Common myeloid progenitor, CD34-positive (primary cell): ENCODE measurements at regions of chr12 and their contacts with region 1.

Region 1: GRCh38 chr12:1634590-1635191 is 5.7 kb downstream of the WNT5B start:
- DNase-seq: peak; percentile 64 to 76 (median 66)
- H3K4me3 ChIP-seq: no peak overlapping the region
- H3K27ac ChIP-seq: no peak overlapping the region
- H3K4me1 ChIP-seq: peaks cover 2 to 24% (median 18%) of the 10 kb centered on the region in 4 experiments
- H3K27me3 ChIP-seq: peaks cover 2 to 41% (median 26%) of the 10 kb centered on the region in 5 experiments

Region 2: GRCh38 chr12:1605129-1606020 is 29.3 kb before region 1 on chr12:
- CTCF ChIA-PET with region 1: interaction called, 21 read pairs
- POLR2A ChIA-PET with region 1: no interaction called
- DNase-seq: peak; percentile 81 to 82 (median 81)
- H3K4me3 ChIP-seq: peak overlapping the region; percentile 17 to 85 (median 70)
- H3K27ac ChIP-seq: no peak overlapping the region
- H3K4me1 ChIP-seq: peaks cover 9 to 31% (median 21%) of the 10 kb centered on the region in 4 experiments
- H3K27me3 ChIP-seq: peaks cover 0 to 3% (median 0%) of the 10 kb centered on the region in 5 experiments

Region 3: GRCh38 chr12:1644534-1645438 is 10.1 kb after region 1 on chr12:
- CTCF ChIA-PET with region 1: interaction called, 160 read pairs
- POLR2A ChIA-PET with region 1: no interaction called
- DNase-seq: peak in 2 of 3 donors; percentile 50 to 84
- H3K4me3 ChIP-seq: no peak overlapping the region
- H3K27ac ChIP-seq: no peak overlapping the region
- H3K4me1 ChIP-seq: peaks cover 0 to 10% (median 5%) of the 10 kb centered on the region in 4 experiments
- H3K27me3 ChIP-seq: no peaks in the 10 kb centered on the region

Region 4: GRCh38 chr12:1811281-1811947 is 176.7 kb after region 1 on chr12:
- CTCF ChIA-PET with region 1: no interaction called
- POLR2A ChIA-PET with region 1: no interaction called
- DNase-seq: peak in 2 of 3 donors; percentile 24 to 31
- H3K4me3 ChIP-seq: no peak overlapping the region
- H3K27ac ChIP-seq: no peak overlapping the region
- H3K4me1 ChIP-seq: peaks cover 0 to 39% (median 8%) of the 10 kb centered on the region in 4 experiments
- H3K27me3 ChIP-seq: peaks cover 0 to 3% (median 0%) of the 10 kb centered on the region in 5 experiments